AG04450 (cell line): ENCODE measurements at regions of chr6 and their contacts with region 1.

Region 1: DNA sequence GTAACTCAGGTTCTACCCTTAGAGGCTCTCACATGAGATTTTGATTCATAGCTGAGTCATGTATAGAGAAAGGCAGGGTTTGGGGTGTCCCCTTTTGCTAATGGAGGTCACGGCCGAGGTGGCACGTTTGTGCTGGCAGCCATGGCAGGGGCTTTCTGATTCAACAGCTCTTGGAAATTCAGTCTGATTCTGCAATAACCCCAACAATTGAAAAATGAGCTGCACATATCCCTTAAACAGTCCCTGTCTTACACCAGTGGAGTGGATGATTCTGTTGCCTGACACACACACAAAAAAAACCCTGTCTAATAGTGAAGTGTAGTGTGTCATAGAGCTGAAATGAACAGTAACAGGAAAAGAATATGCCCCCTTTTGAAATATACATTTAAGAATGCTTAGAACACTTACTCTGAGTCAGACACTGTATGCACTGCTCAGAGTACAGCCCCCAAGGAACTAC is 40.4 kb upstream of the ARG1 start:
- DNase-seq: no peak
- H3K4me3 ChIP-seq: no peak overlapping the region
- H3K27ac ChIP-seq: no peak overlapping the region
- H3K27me3 ChIP-seq: peaks cover 5% of the 10 kb centered on the region
- CTCF ChIP-seq: no peak

Region 2: GRCh38 chr6:130872250-130873095 is 660.1 kb before region 1 on chr6:
- CTCF ChIA-PET with region 1: interaction called, 11 read pairs
- POLR2A ChIA-PET with region 1: no interaction called
- DNase-seq: no peak
- H3K4me3 ChIP-seq: no peak overlapping the region
- H3K27ac ChIP-seq: no peak overlapping the region
- H3K27me3 ChIP-seq: no peaks in the 10 kb centered on the region
- CTCF ChIP-seq: peak; percentile 95

Region 3: GRCh38 chr6:131182991-131183425 is 349.6 kb before region 1 on chr6:
- CTCF ChIA-PET with region 1: interaction called, 71 read pairs
- POLR2A ChIA-PET with region 1: no interaction called
- DNase-seq: no peak
- H3K4me3 ChIP-seq: no peak overlapping the region
- H3K27ac ChIP-seq: no peak overlapping the region
- H3K27me3 ChIP-seq: no peaks in the 10 kb centered on the region
- CTCF ChIP-seq: peak; percentile 71

Region 4: DNA sequence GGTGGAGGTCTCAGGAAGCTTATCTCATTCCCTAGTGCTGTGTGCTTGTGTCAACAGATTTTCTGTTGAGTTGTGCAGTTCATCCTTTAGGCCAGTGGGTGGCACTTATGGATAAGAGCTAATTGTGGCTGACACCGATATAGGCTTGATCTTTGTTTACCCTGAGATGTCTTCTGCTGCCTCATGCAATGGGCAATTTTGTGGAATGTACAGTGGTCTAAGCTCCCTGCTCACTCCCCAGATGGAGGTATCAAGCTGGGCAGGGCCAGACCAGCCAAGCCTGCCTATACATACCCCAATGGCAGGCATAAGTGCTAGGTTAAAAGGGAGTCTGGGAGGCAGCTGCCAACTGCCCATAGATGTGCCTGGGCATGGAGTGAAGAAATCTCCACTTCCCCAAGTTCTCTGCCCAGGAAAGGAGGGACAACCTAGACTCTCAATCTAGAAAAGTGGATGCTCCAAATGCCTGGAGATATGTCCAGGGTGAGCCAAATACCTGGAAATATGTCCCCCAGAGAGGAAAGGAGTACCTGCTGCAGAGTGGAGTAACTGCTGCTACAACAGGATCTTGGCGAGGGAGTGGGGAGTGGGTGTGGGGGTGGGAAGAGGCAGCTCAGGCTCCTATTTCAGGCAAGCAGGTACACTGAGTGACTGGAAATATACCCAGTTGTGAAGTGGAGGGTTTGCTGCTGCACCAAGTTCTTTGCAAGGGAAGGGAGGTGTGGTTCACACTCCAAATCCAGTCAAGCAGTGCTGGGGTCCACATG is 12.8 kb before region 1 on chr6:
- CTCF ChIA-PET with region 1: interaction called, 18 read pairs
- POLR2A ChIA-PET with region 1: no interaction called
- DNase-seq: no peak
- H3K4me3 ChIP-seq: no peak overlapping the region
- H3K27ac ChIP-seq: no peak overlapping the region
- H3K27me3 ChIP-seq: no peaks in the 10 kb centered on the region
- CTCF ChIP-seq: peak; percentile 67

Region 5: DNA sequence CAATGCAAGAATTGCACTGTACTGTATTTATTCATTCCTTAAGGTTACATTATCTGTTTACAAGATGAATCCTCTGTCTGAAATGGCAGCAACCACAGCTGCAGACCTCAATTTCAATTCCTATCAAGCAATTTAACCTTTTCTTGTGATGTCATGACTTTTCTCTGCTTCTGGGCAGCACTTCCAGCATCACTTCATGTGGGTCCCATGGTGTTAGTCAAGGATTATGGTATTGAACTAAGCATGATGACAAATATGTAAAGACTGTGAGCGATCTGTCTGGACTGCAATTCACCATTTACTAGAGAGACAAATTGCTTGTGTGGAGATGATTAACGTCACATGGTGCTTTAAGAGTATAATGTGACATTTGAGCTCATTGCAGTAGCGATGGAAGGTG is 509.1 kb after region 1 on chr6:
- CTCF ChIA-PET with region 1: no interaction called
- POLR2A ChIA-PET with region 1: no interaction called
- DNase-seq: peak; percentile 43
- H3K4me3 ChIP-seq: no peak overlapping the region
- H3K27ac ChIP-seq: no peak overlapping the region
- H3K27me3 ChIP-seq: no peaks in the 10 kb centered on the region
- CTCF ChIP-seq: no peak